Cardiac septum (tissue), 1 donor: ENCODE measurements at regions of chr4 and their contacts with region 1.

Region 1: DNA sequence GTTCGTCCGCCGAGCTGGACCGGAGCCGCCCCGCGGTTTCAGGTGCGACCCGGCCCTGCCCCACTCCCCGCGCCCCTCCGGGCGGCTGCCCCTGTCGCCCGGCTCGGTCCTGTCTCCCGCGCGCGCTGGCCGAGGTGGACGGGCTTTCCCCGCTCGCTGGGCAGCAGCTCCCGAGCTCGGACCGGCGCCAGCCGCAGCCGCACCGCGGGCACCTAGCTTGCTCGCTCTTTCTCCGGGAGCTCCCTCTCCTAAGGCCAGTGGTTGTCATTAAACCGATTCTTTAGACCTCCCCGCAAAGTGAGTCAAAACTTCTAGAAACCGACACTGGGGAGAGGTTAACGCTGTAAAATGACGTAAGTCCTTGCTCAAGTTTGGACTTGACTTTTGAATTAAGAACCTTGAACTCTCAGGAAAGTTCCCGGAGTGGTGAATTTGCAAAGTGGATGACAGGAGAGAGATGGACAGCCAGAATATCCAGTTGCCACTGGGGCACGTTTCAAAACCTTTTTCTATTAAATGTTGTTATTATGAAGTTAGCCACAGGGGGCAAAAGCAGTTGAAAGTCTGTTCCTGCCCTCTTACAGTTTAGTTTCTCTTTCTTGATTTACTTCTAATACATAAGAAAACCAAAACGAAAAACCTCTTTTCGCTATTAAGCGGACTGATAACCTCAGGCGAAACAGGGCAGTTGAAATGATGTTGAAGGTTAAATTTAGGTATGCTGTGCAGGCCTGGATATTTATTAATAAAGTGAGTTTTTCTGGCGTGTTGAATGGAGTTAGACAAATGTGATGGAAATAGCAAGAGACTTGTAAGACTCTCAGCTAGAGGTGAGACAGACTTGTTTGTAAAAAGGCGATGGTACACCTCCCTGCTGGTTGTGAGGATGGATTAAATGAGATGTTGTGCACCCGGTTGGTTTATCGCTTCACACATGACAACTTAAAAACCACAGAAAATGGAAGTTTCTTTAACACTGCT is 847 bp downstream of the PI4K2B start:
- DNase-seq: peak; percentile 84

Region 2: GRCh38 chr4:25376754-25377571 is 142.3 kb after region 1 on chr4 and contains the start of gene ANAPC4:
- intact Hi-C with region 1: loop called (anchors 5 kb)
- DNase-seq: peak; percentile 97
- total RNA-seq, gene ANAPC4: 14.2 TPM